ENCODE measurements at regions of chr17 and their contacts with region 1.

Region 1: DNA sequence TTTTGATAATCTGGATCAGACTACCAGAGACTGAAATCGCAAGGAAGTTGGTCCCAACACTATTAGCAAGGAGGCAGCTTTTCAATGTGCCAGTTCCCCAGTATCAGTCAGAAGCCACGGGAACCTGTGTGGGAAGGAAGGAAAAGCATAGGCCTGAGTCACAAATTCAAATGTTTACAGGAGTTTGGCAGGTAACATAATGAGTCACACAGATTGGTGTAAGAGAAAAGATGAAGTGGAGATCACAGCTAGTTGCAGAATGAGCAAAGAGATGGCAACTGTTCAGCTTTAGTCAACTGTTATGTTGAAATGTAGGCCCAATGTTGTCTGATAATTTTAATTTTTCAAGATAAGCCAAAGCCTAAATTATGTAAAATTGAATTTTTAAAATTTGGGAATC is 28.1 kb upstream of the ITGA2B start:
- DNase-seq: peak in 1 of 2 donors; percentile 20
- ATAC-seq: peak; percentile 95 to 96
- H3K4me3 ChIP-seq: no peak overlapping the region
- H3K27ac ChIP-seq: peak overlapping the region; percentile 65 to 76 (median 71)
- H3K4me1 ChIP-seq: peaks cover 4 to 12% of the 10 kb centered on the region in 2 donors
- H3K27me3 ChIP-seq: no peaks in the 10 kb centered on the region
- CTCF ChIP-seq: no peak
- POLR2A ChIP-seq: no peak

Region 2: GRCh38 chr17:44438636-44439035 is 21.1 kb after region 1 on chr17:
- in situ Hi-C with region 1: no loop called
- intact Hi-C with region 1: no loop called
- DNase-seq: peak; percentile 77 to 85
- ATAC-seq: peak; percentile 98
- H3K4me3 ChIP-seq: peak overlapping the region in 3 of 4 donors; percentile 5 to 22 (median 18)
- H3K27ac ChIP-seq: peak overlapping the region; percentile 84 to 94 (median 89)
- H3K4me1 ChIP-seq: peaks cover 56 to 58% of the 10 kb centered on the region in 2 donors
- H3K27me3 ChIP-seq: no peaks in the 10 kb centered on the region
- CTCF ChIP-seq: no peak
- POLR2A ChIP-seq: no peak

Region 3: GRCh38 chr17:44473367-44473766 is 55.8 kb after region 1 on chr17:
- in situ Hi-C with region 1: no loop called
- intact Hi-C with region 1: loop called (anchors 5 kb)
- DNase-seq: no peak
- ATAC-seq: no peak
- H3K4me3 ChIP-seq: no peak overlapping the region
- H3K27ac ChIP-seq: peak overlapping the region in 2 of 4 donors; percentile 14 to 40
- H3K4me1 ChIP-seq: peaks cover 15 to 27% of the 10 kb centered on the region in 2 donors
- H3K27me3 ChIP-seq: no peaks in the 10 kb centered on the region
- CTCF ChIP-seq: no peak
- POLR2A ChIP-seq: no peak